PC-3 (cell line): ENCODE measurements at regions of chr2 and their contacts with region 1.

Region 1: DNA sequence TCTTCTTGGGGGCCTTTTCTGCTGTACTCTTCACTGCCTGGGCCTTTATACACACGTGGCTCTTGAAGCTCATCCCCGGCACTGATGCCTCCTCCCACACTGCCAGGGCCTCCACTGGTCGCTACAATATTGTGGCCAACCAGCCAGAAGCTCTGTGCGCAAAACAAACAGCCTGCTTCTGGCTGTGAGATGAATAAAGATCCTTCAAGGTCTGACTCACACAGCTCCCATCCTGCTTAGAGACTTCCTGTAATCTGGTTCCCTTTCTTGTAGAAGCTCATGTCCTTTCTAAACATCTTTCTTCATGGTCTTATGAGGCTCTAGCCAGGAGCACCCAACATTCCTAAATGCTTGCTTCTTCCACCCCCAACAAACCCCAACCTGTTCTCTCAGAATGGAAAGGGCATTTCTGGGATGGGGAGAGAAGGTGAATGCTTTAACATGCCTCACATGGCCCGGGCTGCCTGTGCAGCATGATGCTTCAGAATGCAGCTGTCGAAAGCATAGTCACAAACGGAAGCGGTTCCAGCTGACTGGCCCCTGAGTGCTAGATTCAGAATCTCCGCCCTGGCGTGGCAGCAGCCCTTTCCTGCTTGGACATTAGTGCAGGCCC is 24.6 kb downstream of the NRP2 start:
- DNase-seq: peak; percentile 69
- ATAC-seq: peak; percentile 96
- H3K4me3 ChIP-seq: no peak overlapping the region
- H3K27ac ChIP-seq: peak overlapping the region; percentile 68
- H3K4me1 ChIP-seq: peaks cover 25% of the 10 kb centered on the region
- H3K27me3 ChIP-seq: no peaks in the 10 kb centered on the region
- CTCF ChIP-seq: no peak

Region 2: DNA sequence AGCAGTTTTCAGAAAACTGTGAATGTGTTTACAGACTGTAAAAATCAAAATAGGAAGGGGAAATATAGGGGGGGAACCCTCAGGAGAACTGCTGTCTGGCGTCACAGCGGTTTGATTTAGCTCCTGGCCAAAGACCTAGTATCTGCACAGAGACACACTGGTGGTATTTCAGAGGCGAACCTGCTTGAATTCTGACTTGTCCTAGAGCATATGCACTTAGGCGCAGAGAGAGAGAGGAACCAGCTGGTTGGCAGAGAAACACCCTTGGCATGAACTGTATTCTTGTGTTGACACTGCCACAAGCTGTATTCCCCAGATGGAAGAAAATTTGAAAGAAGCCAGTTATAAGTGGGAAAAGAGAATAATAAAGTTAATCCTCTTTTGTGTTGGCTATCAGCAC is 531.0 kb before region 1 on chr2:
- CTCF ChIA-PET with region 1: no interaction called
- POLR2A ChIA-PET with region 1: no interaction called
- intact Hi-C with region 1: no loop called
- DNase-seq: no peak
- ATAC-seq: no peak
- H3K4me3 ChIP-seq: no peak overlapping the region
- H3K27ac ChIP-seq: no peak overlapping the region
- H3K4me1 ChIP-seq: no peaks in the 10 kb centered on the region
- H3K27me3 ChIP-seq: no peaks in the 10 kb centered on the region
- CTCF ChIP-seq: no peak

Region 3: GRCh38 chr2:205748639-205749477 is 42.0 kb after region 1 on chr2:
- CTCF ChIA-PET with region 1: no interaction called
- POLR2A ChIA-PET with region 1: no interaction called
- intact Hi-C with region 1: loop called (anchors 2 kb)
- DNase-seq: peak; percentile 93
- ATAC-seq: peak; percentile 72
- H3K4me3 ChIP-seq: 0 out of 2 replicates have a peak overlapping the region, but pooled peaks have one; percentile 9
- H3K27ac ChIP-seq: peak overlapping the region; percentile 99
- H3K4me1 ChIP-seq: peaks cover 69% of the 10 kb centered on the region
- H3K27me3 ChIP-seq: no peaks in the 10 kb centered on the region
- CTCF ChIP-seq: no peak